SK-N-SH (cell line): ENCODE measurements at regions of chr7 and their contacts with region 1.

Region 1: GRCh38 chr7:44921607-44922359 is 36.5 kb upstream of the PURB start:
- DNase-seq: peak; percentile 90
- H3K4me3 ChIP-seq: no peak overlapping the region; a peak in 1 of 4 replicates
- H3K27ac ChIP-seq: no peak overlapping the region
- H3K4me1 ChIP-seq: no peaks in the 10 kb centered on the region
- H3K27me3 ChIP-seq: 0 out of 2 replicates have a peak, but pooled peaks cover 3% of the 10 kb centered on the region
- CTCF ChIP-seq: peak; percentile 95
- EP300 ChIP-seq: no peak
- RAD21 ChIP-seq: peak; percentile 87

Region 2: DNA sequence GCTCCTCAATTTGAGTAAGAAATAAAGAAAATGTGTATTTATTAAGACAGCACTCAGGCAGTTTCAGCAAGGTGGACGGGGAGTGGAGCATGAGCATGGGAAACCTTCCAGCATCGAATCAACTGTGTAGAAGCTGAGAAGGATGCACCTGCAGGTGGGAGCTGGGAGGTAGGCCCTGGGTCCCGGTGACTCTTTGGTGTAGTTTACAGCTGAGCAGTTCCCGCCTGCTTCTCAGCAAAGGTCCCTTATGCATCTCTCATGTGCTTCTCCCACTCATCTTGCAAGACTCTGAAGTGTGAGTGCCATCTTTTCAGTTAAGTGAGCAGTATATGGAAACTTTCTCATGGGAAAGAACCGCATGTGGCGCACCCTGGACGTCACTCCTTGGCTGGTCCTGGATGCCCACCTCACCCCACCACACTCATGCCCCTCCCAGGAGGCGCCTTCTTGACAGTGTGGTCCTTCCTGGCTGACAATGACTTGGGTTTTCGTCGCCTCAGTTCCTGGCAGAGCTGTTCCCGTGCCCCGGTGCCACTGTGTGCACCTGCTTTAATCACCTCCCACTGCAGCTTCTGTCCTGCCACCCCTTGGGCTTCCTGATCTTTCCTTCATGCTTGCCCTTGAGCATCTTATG is 16.7 kb before region 1 on chr7:
- CTCF ChIA-PET with region 1: interaction called, 10 read pairs
- POLR2A ChIA-PET with region 1: no interaction called
- DNase-seq: no peak
- H3K4me3 ChIP-seq: no peak overlapping the region
- H3K27ac ChIP-seq: no peak overlapping the region
- H3K4me1 ChIP-seq: no peaks in the 10 kb centered on the region
- H3K27me3 ChIP-seq: no peaks in the 10 kb centered on the region
- CTCF ChIP-seq: no peak
- EP300 ChIP-seq: no peak
- RAD21 ChIP-seq: no peak

Region 3: GRCh38 chr7:44936322-44936721 is 14.5 kb after region 1 on chr7:
- CTCF ChIA-PET with region 1: interaction called, 19 read pairs
- POLR2A ChIA-PET with region 1: no interaction called
- DNase-seq: no peak
- H3K4me3 ChIP-seq: no peak overlapping the region
- H3K27ac ChIP-seq: no peak overlapping the region
- H3K4me1 ChIP-seq: no peaks in the 10 kb centered on the region
- H3K27me3 ChIP-seq: peaks cover 27% of the 10 kb centered on the region; the same call in 1 of the 2 replicates
- CTCF ChIP-seq: no peak
- EP300 ChIP-seq: no peak
- RAD21 ChIP-seq: no peak

Region 4: DNA sequence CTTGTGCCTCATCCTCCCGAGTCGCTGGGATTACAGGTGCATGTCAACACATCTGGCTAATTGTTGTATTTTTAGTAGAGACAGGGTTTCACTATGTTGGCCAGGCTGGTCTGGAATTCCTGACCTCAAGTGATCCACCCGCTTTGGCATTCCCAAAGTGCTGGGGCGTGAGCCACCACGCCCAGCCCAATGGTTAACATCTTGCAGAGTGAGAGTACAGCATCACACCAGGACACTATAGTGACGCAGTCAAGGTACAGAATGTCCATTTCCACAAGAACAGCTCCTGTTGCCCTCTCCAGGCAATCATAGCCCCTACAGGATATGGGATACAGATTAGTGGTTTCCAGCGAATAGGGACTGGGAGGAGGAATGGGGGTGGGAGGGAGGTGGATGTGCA is 23.0 kb after region 1 on chr7:
- CTCF ChIA-PET with region 1: interaction called, 14 read pairs
- POLR2A ChIA-PET with region 1: no interaction called
- DNase-seq: no peak
- H3K4me3 ChIP-seq: no peak overlapping the region
- H3K27ac ChIP-seq: no peak overlapping the region
- H3K4me1 ChIP-seq: no peaks in the 10 kb centered on the region
- H3K27me3 ChIP-seq: peaks cover 29% of the 10 kb centered on the region; the same call in 1 of the 2 replicates
- CTCF ChIP-seq: no peak
- EP300 ChIP-seq: no peak
- RAD21 ChIP-seq: no peak

Region 5: GRCh38 chr7:44998153-44998871 is 76.5 kb after region 1 on chr7:
- CTCF ChIA-PET with region 1: no interaction called
- POLR2A ChIA-PET with region 1: no interaction called
- DNase-seq: peak; percentile 17
- H3K4me3 ChIP-seq: no peak overlapping the region
- H3K27ac ChIP-seq: peak overlapping the region; percentile 47 to 80; a peak in 3 of 4 replicates
- H3K4me1 ChIP-seq: peaks cover 0 to 10% of the 10 kb centered on the region in 2 experiments; a peak in 3 of 4 replicates
- H3K27me3 ChIP-seq: no peaks in the 10 kb centered on the region
- CTCF ChIP-seq: no peak
- EP300 ChIP-seq: no peak
- RAD21 ChIP-seq: no peak

Region 6: DNA sequence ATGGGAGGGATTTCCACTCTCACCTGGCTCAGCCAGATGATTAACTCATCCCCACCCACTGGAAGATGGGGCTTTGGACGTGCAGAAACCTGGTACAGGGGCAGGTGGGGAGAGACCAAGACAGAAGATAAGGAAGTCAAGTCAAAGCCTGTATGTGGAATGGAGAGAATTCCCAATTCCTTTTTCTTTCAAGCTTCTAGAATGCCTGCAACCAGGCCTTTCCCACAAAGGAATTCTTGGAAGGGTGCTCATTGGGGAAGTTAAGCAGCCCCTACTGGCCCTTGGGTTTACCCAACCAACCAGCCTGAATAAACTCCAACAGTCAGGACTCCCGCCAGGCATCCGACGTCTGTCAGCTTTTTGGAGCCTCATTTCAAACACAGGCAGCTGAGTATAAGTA is 117.3 kb after region 1 on chr7:
- CTCF ChIA-PET with region 1: no interaction called
- POLR2A ChIA-PET with region 1: no interaction called
- DNase-seq: no peak
- H3K4me3 ChIP-seq: no peak overlapping the region
- H3K27ac ChIP-seq: no peak overlapping the region
- H3K4me1 ChIP-seq: peaks cover 0 to 2% of the 10 kb centered on the region in 2 experiments; a peak in 1 of 4 replicates
- H3K27me3 ChIP-seq: no peaks in the 10 kb centered on the region
- CTCF ChIP-seq: no peak
- EP300 ChIP-seq: no peak
- RAD21 ChIP-seq: no peak